B cell (primary cell): ENCODE measurements at regions of chr9 and their contacts with region 1.

Region 1: DNA sequence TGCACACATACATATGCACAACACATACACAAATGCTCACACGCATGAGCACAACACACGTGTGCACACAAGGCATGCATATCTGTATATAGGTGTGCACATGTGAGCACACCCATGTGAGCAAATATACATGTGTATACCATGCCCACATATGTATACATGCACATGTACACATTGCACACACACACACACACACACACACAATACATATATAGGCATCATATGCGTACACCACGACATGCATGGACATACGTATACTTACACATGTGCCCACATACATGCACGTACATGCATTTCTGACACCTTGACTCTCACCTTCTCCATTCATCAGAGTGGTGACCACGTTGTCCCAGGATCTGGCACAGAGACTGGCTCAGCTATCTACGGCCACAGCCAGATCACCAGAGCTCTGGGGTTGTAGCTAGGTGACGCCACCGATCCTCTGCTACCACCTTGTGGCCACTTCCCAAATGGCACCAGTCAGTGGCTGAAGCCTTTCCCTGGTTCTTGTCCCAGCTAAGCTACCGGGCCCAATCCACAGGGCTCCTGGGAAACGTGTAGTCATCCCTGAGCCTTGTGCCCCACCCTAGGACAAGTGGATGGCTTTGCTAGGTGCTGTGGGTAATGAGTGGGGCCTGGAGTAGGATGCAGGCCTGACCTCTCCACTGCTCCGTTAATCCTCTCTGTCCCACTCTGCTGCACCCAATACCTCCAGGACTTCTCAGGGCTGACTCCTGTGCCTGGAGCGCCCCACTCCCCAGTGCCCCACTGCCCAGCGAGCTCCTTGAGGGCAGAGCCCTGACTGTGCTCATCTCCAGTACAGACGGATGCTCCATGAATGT is 194.4 kb downstream of the RGS3 start:
- DNase-seq: peak; percentile 86
- ATAC-seq: peak; percentile 93
- H3K4me3 ChIP-seq: no peak overlapping the region
- H3K4me3 Mint-ChIP-seq: no peak overlapping the region
- H3K27ac ChIP-seq: no peak overlapping the region
- H3K27ac Mint-ChIP-seq: peak overlapping the region; percentile 71
- H3K4me1 ChIP-seq: no peaks in the 10 kb centered on the region
- H3K4me1 Mint-ChIP-seq: no peaks in the 10 kb centered on the region
- H3K27me3 ChIP-seq: peaks cover 0 to 17% (median 7%) of the 10 kb centered on the region in 4 experiments
- H3K27me3 Mint-ChIP-seq: peaks cover 34% of the 10 kb centered on the region
- CTCF ChIP-seq: peak; percentile 92

Region 2: GRCh38 chr9:113221003-113221799 is 436.7 kb before region 1 on chr9 and contains the starts of genes FKBP15 and SLC31A1:
- CTCF ChIA-PET with region 1: interaction called, 16 read pairs
- POLR2A ChIA-PET with region 1: no interaction called
- intact Hi-C with region 1: no loop called
- DNase-seq: peak; percentile 98
- ATAC-seq: peak; percentile 98
- H3K4me3 ChIP-seq: peak within 1 kb of the TSS; percentile 77 to 97 (median 94)
- H3K4me3 Mint-ChIP-seq: peak within 1 kb of the TSS; percentile 95
- H3K27ac ChIP-seq: peak within 1 kb of the TSS; percentile 59 to 84
- H3K27ac Mint-ChIP-seq: peak within 1 kb of the TSS; percentile 95
- H3K4me1 ChIP-seq: peaks cover 33 to 35% of the 10 kb centered on the region in 2 donors
- H3K4me1 Mint-ChIP-seq: peaks cover 48% of the 10 kb centered on the region
- H3K27me3 ChIP-seq: no peaks in the 10 kb centered on the region
- H3K27me3 Mint-ChIP-seq: no peaks in the 10 kb centered on the region
- CTCF ChIP-seq: no peak
- total RNA-seq, gene FKBP15: 40.6 and 41.2 TPM in 2 replicates
- total RNA-seq, gene SLC31A1: 3.2 and 3.5 TPM in 2 replicates

Region 3: GRCh38 chr9:113340017-113340699 is 317.8 kb before region 1 on chr9 and contains the start of gene WDR31:
- CTCF ChIA-PET with region 1: interaction called, 10 read pairs
- POLR2A ChIA-PET with region 1: no interaction called
- intact Hi-C with region 1: no loop called
- DNase-seq: peak; percentile 84
- ATAC-seq: peak; percentile 97
- H3K4me3 ChIP-seq: peak within 1 kb of the TSS; percentile 42 to 85 (median 73)
- H3K4me3 Mint-ChIP-seq: peak within 1 kb of the TSS; percentile 90
- H3K27ac ChIP-seq: peak within 1 kb of the TSS in 1 of 2 donors; percentile 41
- H3K27ac Mint-ChIP-seq: peak within 1 kb of the TSS; percentile 84
- H3K4me1 ChIP-seq: peaks cover 8 to 12% of the 10 kb centered on the region in 2 donors
- H3K4me1 Mint-ChIP-seq: peaks cover 16% of the 10 kb centered on the region
- H3K27me3 ChIP-seq: no peaks in the 10 kb centered on the region
- H3K27me3 Mint-ChIP-seq: peaks cover 8% of the 10 kb centered on the region
- CTCF ChIP-seq: no peak
- total RNA-seq, gene WDR31: 0.62 and 1.0 TPM in 2 replicates

Region 4: GRCh38 chr9:113446323-113446740 is 211.6 kb before region 1 on chr9:
- CTCF ChIA-PET with region 1: interaction called, 311 read pairs
- POLR2A ChIA-PET with region 1: no interaction called
- intact Hi-C with region 1: loop called (anchors 2 kb)
- DNase-seq: peak; percentile 58
- ATAC-seq: no peak
- H3K4me3 ChIP-seq: no peak overlapping the region
- H3K4me3 Mint-ChIP-seq: no peak overlapping the region
- H3K27ac ChIP-seq: no peak overlapping the region
- H3K27ac Mint-ChIP-seq: no peak overlapping the region
- H3K4me1 ChIP-seq: no peaks in the 10 kb centered on the region
- H3K4me1 Mint-ChIP-seq: no peaks in the 10 kb centered on the region
- H3K27me3 ChIP-seq: no peaks in the 10 kb centered on the region
- H3K27me3 Mint-ChIP-seq: no peaks in the 10 kb centered on the region
- CTCF ChIP-seq: peak; percentile 80

Region 5: GRCh38 chr9:113591001-113591898 is 66.7 kb before region 1 on chr9:
- CTCF ChIA-PET with region 1: interaction called, 411 read pairs
- POLR2A ChIA-PET with region 1: interaction called, 3 read pairs
- intact Hi-C with region 1: no loop called
- DNase-seq: peak; percentile 75
- ATAC-seq: peak; percentile 67
- H3K4me3 ChIP-seq: no peak overlapping the region
- H3K4me3 Mint-ChIP-seq: no peak overlapping the region
- H3K27ac ChIP-seq: no peak overlapping the region
- H3K27ac Mint-ChIP-seq: no peak overlapping the region
- H3K4me1 ChIP-seq: peaks cover 12 to 17% of the 10 kb centered on the region in 2 donors
- H3K4me1 Mint-ChIP-seq: peaks cover 16% of the 10 kb centered on the region
- H3K27me3 ChIP-seq: no peaks in the 10 kb centered on the region
- H3K27me3 Mint-ChIP-seq: no peaks in the 10 kb centered on the region
- CTCF ChIP-seq: peak; percentile 85

Region 6: DNA sequence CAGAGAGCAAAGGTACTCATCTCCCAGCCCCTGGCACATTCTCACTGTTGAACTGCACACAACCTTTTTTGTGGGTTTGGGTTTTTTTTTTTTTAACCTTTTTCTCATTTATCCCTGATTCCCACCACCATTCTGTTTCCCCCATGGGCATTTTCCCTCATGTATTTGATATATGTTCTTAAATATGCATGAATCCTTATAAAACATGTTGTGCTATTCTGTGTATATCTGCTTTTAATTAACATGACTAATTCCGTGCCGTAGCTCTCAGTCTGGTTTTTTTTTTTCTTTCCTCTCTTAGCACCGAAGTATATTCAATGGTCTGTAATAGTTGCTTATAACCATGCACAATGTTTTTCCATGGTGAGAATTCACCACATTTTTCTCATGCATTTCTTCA is 10.1 kb after region 1 on chr9:
- CTCF ChIA-PET with region 1: interaction called, 15 read pairs
- POLR2A ChIA-PET with region 1: no interaction called
- intact Hi-C with region 1: no loop called
- DNase-seq: no peak
- ATAC-seq: no peak
- H3K4me3 ChIP-seq: no peak overlapping the region
- H3K4me3 Mint-ChIP-seq: no peak overlapping the region
- H3K27ac ChIP-seq: no peak overlapping the region
- H3K27ac Mint-ChIP-seq: no peak overlapping the region
- H3K4me1 ChIP-seq: no peaks in the 10 kb centered on the region
- H3K4me1 Mint-ChIP-seq: peaks cover 14% of the 10 kb centered on the region
- H3K27me3 ChIP-seq: peaks cover 0 to 7% (median 0%) of the 10 kb centered on the region in 4 experiments
- H3K27me3 Mint-ChIP-seq: peaks cover 8% of the 10 kb centered on the region
- CTCF ChIP-seq: no peak